ENCODE measurements at regions of chr6 and their contacts with region 1.

Region 1: DNA sequence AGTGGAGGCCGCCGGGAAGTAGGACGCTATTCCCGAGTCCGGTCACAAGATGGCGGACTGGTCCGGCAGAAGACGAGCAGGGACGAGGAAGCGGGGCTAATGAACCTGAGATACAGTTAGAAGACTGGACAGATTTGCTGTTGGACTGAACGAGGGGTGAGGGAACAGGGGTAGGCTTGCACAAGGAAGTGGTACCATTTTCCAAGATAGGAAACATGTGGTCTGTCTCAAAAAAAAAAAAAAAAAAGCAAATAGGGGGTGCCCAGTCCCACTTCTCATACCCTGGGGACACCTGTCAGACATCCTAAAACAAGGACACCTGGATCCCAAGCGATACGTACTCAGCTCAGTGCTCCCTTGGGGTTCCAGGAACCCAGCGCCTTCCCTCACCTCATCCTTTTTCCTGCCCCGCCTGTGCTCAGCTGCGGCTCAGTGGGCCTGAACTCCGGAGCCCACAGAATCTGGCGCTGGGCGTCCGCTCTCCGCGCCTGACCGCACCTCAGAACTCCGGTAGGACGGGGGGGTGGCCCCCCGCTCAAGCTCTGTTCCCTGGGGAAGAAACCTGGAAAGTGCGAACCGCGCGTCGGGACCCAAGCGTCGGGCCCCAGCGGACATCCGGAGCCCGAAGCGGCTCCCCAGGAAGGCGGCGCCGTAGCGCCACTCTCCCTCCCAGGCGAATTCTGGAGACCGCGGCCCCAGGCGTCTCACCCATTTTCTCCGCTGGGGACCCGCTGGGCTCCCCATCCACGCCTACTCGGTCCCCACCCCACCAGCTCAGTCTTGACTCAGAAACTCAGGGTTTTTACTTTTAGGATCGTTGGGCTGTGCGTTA is at the start of gene LY6G5C:
- DNase-seq: peak; percentile 94
- ATAC-seq: peak; percentile 96
- H3K4me3 ChIP-seq: peak within 1 kb of the TSS; percentile 27
- H3K27ac ChIP-seq: peak within 1 kb of the TSS; percentile 42
- H3K4me1 ChIP-seq: peaks cover 12% of the 10 kb centered on the region
- H3K27me3 ChIP-seq: no peaks in the 10 kb centered on the region
- CTCF ChIP-seq: peak; percentile 94
- POLR2A ChIP-seq: no peak; the same call in 1 of the 2 replicates
- RAD21 ChIP-seq: peak; percentile 97
- total RNA-seq, gene LY6G5C: 0.18 TPM in 1 of 2 replicates, not detected in the other

Region 2: DNA sequence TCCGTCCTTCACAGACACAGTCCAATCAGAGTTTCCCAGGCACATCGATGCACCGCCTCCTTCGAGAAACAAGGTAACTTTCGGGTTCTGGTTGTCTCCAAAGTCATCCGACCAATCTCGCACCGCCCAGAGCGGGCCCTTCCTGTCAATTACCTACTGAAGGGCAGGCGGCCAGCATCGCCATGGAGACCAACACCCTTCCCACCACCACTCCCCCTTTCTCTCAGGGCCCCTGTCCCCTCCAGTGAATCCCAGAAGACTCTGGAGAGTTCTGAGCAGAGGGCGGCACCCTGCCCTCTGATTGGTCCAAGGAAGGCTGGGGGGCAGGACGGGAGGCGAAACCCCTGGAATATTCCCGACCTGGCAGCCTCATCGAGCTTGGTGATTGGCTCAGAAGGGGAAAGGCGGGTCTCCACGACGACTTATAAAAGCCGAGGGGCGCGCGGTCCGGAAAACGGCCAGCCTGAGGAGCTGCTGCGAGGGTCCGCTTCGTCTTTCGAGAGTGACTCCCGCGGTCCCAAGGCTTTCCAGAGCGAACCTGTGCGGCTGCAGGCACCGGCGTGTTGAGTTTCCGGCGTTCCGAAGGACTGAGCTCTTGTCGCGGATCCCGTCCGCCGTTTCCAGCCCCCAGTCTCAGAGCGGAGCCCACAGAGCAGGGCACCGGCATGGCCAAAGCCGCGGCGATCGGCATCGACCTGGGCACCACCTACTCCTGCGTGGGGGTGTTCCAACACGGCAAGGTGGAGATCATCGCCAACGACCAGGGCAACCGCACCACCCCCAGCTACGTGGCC is 146.4 kb after region 1 on chr6 and contains the start of gene HSPA1B:
- CTCF ChIA-PET with region 1: no interaction called
- POLR2A ChIA-PET with region 1: no interaction called
- dilution Hi-C with region 1: no loop called
- in situ Hi-C with region 1: loop called (anchors 10 kb)
- intact Hi-C with region 1: loop called (anchors 1 kb)
- DNase-seq: peak; percentile 100
- ATAC-seq: peak; percentile 92
- H3K4me3 ChIP-seq: peak within 1 kb of the TSS; percentile 64
- H3K27ac ChIP-seq: peak within 1 kb of the TSS; percentile 93
- H3K4me1 ChIP-seq: peaks cover 9% of the 10 kb centered on the region
- H3K27me3 ChIP-seq: no peaks in the 10 kb centered on the region
- CTCF ChIP-seq: no peak
- POLR2A ChIP-seq: peak; percentile 99
- RAD21 ChIP-seq: no peak
- total RNA-seq, gene HSPA1B: 93.6 and 118 TPM in 2 replicates

Region 3: GRCh38 chr6:31862344-31863227 is 181.5 kb after region 1 on chr6 and contains the start of gene NEU1:
- CTCF ChIA-PET with region 1: no interaction called
- POLR2A ChIA-PET with region 1: no interaction called
- dilution Hi-C with region 1: no loop called
- in situ Hi-C with region 1: no loop called
- intact Hi-C with region 1: loop called (anchors 1 kb)
- DNase-seq: peak; percentile 100
- ATAC-seq: peak; percentile 96
- H3K4me3 ChIP-seq: peak within 1 kb of the TSS; percentile 72
- H3K27ac ChIP-seq: peak within 1 kb of the TSS; percentile 50
- H3K4me1 ChIP-seq: peaks cover 4% of the 10 kb centered on the region
- H3K27me3 ChIP-seq: no peaks in the 10 kb centered on the region
- CTCF ChIP-seq: no peak
- POLR2A ChIP-seq: peak; percentile 98
- RAD21 ChIP-seq: 0 out of 2 replicates have a peak, but pooled peaks have one; percentile 2
- total RNA-seq, gene NEU1: 23.6 and 28.5 TPM in 2 replicates

Region 4: GRCh38 chr6:31945507-31946369 is 264.7 kb after region 1 on chr6 and contains the start of gene CFB:
- CTCF ChIA-PET with region 1: no interaction called
- POLR2A ChIA-PET with region 1: no interaction called
- dilution Hi-C with region 1: no loop called
- in situ Hi-C with region 1: loop called (anchors 10 kb)
- intact Hi-C with region 1: no loop called
- DNase-seq: peak; percentile 86
- ATAC-seq: peak; percentile 95
- H3K4me3 ChIP-seq: peak within 1 kb of the TSS; percentile 3; the same call in 1 of the 2 replicates
- H3K27ac ChIP-seq: peak within 1 kb of the TSS; percentile 64
- H3K4me1 ChIP-seq: peaks cover 22% of the 10 kb centered on the region
- H3K27me3 ChIP-seq: no peaks in the 10 kb centered on the region
- CTCF ChIP-seq: no peak
- POLR2A ChIP-seq: no peak
- RAD21 ChIP-seq: no peak
- total RNA-seq, gene CFB: 1.4 and 1.8 TPM in 2 replicates

Measured in IMR-90 (cell line).